Mammary epithelial cell (primary cell): ENCODE measurements at regions of chr11 and their contacts with region 1.

Region 1: DNA sequence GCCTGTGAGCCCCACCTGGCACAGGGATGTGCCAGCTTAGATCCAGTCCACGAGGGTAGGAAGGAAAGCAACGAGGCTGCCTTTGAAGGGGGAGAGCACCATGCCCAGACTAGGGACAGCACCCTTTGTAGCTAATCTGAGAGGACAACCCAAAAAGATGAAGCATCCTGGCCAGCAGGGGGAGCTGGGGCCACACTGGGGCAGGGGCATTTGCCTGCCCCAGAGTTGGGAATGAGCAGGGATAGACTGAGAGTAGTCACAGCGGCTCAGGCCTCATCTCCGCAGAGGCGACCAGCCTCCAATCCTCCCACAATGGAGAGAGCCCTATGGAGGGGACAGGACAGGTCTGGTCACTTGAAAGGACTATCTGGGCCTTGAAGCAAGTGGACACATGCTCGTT is 16.4 kb downstream of the LMO1 start:
- DNase-seq: no peak
- H3K4me3 ChIP-seq: no peak overlapping the region
- H3K27ac ChIP-seq: no peak overlapping the region
- H3K4me1 ChIP-seq: no peaks in the 10 kb centered on the region
- H3K27me3 ChIP-seq: no peaks in the 10 kb centered on the region
- CTCF ChIP-seq: peak; percentile 67 to 83

Region 2: DNA sequence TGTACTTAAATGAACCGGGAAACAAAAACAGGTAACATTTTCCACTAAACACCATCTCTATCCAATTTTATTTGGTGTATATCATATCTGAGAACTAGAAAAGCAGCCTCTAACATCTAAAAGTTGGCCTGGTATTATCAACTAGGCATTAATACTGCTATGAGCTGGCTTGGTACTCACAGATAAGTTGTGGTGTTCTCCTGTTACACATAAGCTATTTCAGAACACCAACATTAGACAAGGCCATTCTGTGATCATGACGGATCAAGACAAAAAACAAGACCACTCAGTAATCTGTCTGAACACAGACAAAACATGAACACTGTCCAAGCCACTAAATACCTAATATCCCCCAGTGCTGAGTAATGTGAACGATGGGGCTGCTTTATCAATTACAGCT is 90.4 kb before region 1 on chr11:
- CTCF ChIA-PET with region 1: no interaction called
- dilution Hi-C with region 1: loop called (anchors 5 kb)
- in situ Hi-C with region 1: no loop called
- intact Hi-C with region 1: no loop called
- DNase-seq: no peak
- H3K4me3 ChIP-seq: no peak overlapping the region
- H3K27ac ChIP-seq: no peak overlapping the region
- H3K4me1 ChIP-seq: no peaks in the 10 kb centered on the region
- H3K27me3 ChIP-seq: peaks cover 2% of the 10 kb centered on the region
- CTCF ChIP-seq: no peak

Region 3: GRCh38 chr11:8263769-8264410 is 16.6 kb after region 1 on chr11 and contains the start of gene LMO1:
- CTCF ChIA-PET with region 1: no interaction called
- dilution Hi-C with region 1: no loop called
- in situ Hi-C with region 1: no loop called
- intact Hi-C with region 1: loop called (anchors 1 kb)
- DNase-seq: peak; percentile 49
- H3K4me3 ChIP-seq: peak within 1 kb of the TSS; percentile 28 to 42 (median 33)
- H3K27ac ChIP-seq: no peak within 1 kb of the TSS
- H3K4me1 ChIP-seq: peaks cover 31% of the 10 kb centered on the region
- H3K27me3 ChIP-seq: peaks cover 50% of the 10 kb centered on the region
- CTCF ChIP-seq: peak; percentile 76 to 95
- total RNA-seq, gene LMO1: 0.17 to 0.54 TPM

Region 4: DNA sequence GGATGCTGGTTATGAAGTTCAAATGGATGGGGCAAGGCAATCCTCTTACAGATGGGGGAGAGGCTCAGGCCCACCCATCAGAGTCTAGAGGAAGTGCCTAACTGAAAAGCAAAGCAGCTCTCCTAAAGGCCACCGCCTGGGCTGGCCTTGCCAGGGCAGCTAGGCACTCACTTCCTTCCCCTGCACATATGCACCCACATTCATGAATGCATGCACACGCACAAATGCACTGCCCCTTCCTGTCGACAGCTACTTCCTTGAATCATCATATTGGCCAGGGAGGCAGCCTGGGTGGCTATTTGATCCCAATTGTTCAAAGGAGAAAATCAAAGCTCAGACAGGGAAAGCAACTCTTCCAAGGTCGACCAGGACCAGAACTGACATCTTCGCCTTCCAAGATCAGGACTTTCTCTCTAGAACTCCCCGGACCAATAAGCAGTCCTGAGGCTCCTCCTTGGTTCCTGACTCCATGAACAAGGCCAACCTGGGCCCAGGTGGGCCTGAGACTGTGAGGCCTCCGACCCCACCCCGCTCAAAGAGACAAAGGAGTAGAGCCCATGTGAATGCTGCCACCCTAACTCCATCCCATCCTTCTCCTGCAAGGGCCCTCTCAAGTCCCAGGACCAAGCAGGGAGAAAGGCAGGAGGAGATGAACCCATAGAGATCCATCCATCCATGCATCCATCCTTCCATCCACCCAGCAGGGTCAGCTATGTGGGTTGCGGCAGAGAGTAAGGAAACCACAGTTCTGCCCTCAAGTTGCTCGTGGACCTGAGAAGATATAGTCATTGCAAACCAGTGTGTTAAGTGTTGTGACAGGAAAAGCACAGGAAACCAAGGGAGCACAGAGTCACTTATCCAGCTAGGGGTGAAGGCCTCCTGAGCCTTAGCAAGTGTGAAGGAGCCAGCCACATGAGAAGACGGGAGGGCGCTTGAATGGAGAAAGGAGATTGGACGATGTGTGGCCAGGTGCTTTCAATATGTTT is 51.8 kb after region 1 on chr11:
- CTCF ChIA-PET with region 1: no interaction called
- dilution Hi-C with region 1: no loop called
- in situ Hi-C with region 1: no loop called
- intact Hi-C with region 1: no loop called
- DNase-seq: no peak
- H3K4me3 ChIP-seq: no peak overlapping the region
- H3K27ac ChIP-seq: no peak overlapping the region
- H3K4me1 ChIP-seq: no peaks in the 10 kb centered on the region
- H3K27me3 ChIP-seq: no peaks in the 10 kb centered on the region
- CTCF ChIP-seq: no peak

Region 5: GRCh38 chr11:8318336-8318935 is 71.1 kb after region 1 on chr11:
- CTCF ChIA-PET with region 1: no interaction called
- dilution Hi-C with region 1: no loop called
- in situ Hi-C with region 1: no loop called
- intact Hi-C with region 1: no loop called
- DNase-seq: no peak
- H3K4me3 ChIP-seq: no peak overlapping the region
- H3K27ac ChIP-seq: no peak overlapping the region
- H3K4me1 ChIP-seq: no peaks in the 10 kb centered on the region
- H3K27me3 ChIP-seq: no peaks in the 10 kb centered on the region
- CTCF ChIP-seq: peak; percentile 11 to 37